Activated B cell treated with CpG ODN at 0.5 μM for 24 hours (primary cell): ENCODE measurements at regions of chr1 and their contacts with region 1.

Region 1: DNA sequence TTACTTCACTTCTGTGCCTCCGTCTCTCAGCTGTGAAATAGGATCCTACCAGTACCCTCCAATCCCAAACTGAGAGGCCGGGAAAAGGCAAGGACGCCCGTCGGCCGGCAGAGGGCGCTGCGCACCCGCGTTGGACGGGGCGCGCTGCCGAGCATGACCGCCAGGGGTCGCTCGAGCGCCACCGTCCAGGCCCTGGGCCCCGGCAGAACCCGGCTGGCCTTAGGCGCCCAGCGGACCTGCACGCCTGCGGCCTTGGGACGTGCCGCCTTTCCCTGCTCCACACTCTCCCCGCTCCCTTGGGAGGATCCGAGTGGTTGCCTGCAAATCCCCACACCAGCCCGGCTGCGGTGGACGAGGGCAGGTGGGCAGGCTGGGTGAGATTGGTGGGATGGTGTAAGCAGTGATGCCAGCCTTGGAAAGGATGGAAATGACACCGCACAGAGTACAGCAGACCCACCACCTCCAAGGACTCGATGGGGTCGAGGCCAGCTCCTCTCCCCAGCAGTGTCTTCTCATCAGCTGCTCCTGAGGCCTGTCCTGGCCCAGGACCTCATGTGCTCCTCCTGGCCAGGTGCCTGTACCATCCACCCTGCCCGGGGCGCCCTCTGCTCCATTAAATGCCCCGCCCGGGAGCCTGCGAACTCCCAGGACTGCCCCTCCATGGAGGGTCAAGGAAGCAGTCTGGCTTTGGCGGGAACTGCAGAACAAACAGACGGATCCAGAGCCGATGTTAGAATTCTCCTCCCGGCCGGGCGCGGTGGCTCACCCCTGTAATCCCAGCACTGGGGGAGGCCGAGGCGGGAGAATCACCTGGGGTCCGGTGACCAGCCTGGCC is 47.4 kb upstream of the LBR start:
- DNase-seq: peak; percentile 84
- ATAC-seq: peak; percentile 83
- H3K4me3 Mint-ChIP-seq: no peak overlapping the region
- H3K27ac Mint-ChIP-seq: no peak overlapping the region
- H3K4me1 Mint-ChIP-seq: peaks cover 40% of the 10 kb centered on the region
- H3K27me3 Mint-ChIP-seq: no peaks in the 10 kb centered on the region
- CTCF ChIP-seq: peak; percentile 100

Region 2: GRCh38 chr1:225514671-225515081 is 39.5 kb after region 1 on chr1:
- CTCF ChIA-PET with region 1: no interaction called
- POLR2A ChIA-PET with region 1: no interaction called
- intact Hi-C with region 1: no loop called
- DNase-seq: no peak
- ATAC-seq: no peak
- H3K4me3 Mint-ChIP-seq: no peak overlapping the region
- H3K27ac Mint-ChIP-seq: no peak overlapping the region
- H3K4me1 Mint-ChIP-seq: no peaks in the 10 kb centered on the region
- H3K27me3 Mint-ChIP-seq: peaks cover 13% of the 10 kb centered on the region
- CTCF ChIP-seq: no peak

Region 3: GRCh38 chr1:225652729-225653462 is 177.7 kb after region 1 on chr1 and contains the start of gene ENAH:
- CTCF ChIA-PET with region 1: interaction called, 3 read pairs
- POLR2A ChIA-PET with region 1: no interaction called
- intact Hi-C with region 1: loop called (anchors 5 kb)
- DNase-seq: peak; percentile 49
- ATAC-seq: peak; percentile 69
- H3K4me3 Mint-ChIP-seq: peak within 1 kb of the TSS; percentile 92
- H3K27ac Mint-ChIP-seq: peak within 1 kb of the TSS; percentile 24
- H3K4me1 Mint-ChIP-seq: peaks cover 13% of the 10 kb centered on the region
- H3K27me3 Mint-ChIP-seq: peaks cover 9% of the 10 kb centered on the region
- CTCF ChIP-seq: no peak
- total RNA-seq, gene ENAH: 1.2 and 1.4 TPM in 2 replicates

Region 4: GRCh38 chr1:225845571-225846259 is 370.5 kb after region 1 on chr1:
- CTCF ChIA-PET with region 1: interaction called, 3 read pairs
- POLR2A ChIA-PET with region 1: no interaction called
- intact Hi-C with region 1: loop called (anchors 2 kb)
- DNase-seq: no peak
- ATAC-seq: no peak
- H3K4me3 Mint-ChIP-seq: no peak overlapping the region
- H3K27ac Mint-ChIP-seq: peak overlapping the region; percentile 56
- H3K4me1 Mint-ChIP-seq: peaks cover 47% of the 10 kb centered on the region
- H3K27me3 Mint-ChIP-seq: no peaks in the 10 kb centered on the region
- CTCF ChIP-seq: no peak

Region 5: DNA sequence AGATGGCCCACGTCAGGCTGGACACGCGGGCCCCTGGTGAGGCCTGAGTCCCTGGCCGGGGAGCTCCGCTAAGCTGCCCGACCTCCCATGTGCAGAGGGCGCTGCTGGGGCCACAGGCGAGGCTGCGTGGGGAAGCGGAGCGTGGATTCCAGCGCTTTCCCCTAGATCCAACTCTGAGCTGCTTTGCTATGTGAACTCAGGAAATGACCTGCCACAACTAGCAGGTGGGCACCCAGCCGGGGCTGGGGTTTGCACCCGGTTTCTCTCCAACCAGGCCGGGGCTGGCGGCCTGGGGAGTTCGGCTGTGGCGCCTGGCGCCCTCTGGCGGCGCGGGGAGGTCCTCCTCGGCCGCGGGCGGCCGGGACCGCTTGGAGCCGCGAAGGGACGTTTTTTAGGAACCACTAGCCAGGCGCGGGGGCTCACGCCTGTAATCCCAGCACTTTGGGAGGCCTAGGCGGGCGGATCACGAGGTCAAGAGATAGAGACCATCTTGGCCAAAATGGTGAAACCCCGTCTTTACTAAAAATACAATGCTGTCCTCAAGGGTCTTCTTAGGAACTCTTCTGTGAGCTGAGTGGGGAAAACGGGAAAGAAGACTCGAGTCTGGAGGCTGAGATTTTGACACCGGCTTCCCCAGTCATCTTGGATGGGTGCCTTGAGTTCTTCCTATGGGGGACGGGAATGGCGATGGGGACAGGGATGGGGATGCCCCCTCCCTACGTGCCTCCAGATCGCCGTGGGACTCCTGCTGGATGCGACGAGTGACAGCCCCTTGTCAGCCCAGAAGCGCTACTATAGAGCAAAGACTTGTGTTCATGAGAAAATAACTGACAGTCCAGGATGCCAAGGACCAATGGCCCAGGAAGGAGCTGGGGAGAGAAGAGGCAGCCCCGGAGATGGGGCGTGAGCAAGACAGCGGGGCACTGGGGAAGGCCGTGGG is 436.3 kb after region 1 on chr1:
- CTCF ChIA-PET with region 1: interaction called, 12 read pairs
- POLR2A ChIA-PET with region 1: no interaction called
- intact Hi-C with region 1: loop called (anchors 1 kb)
- DNase-seq: peak; percentile 66
- ATAC-seq: peak; percentile 90
- H3K4me3 Mint-ChIP-seq: no peak overlapping the region
- H3K27ac Mint-ChIP-seq: no peak overlapping the region
- H3K4me1 Mint-ChIP-seq: peaks cover 23% of the 10 kb centered on the region
- H3K27me3 Mint-ChIP-seq: no peaks in the 10 kb centered on the region
- CTCF ChIP-seq: peak; percentile 40

Region 6: GRCh38 chr1:225987491-225988316 is 512.5 kb after region 1 on chr1:
- CTCF ChIA-PET with region 1: interaction called, 12 read pairs
- POLR2A ChIA-PET with region 1: interaction called, 3 read pairs
- intact Hi-C with region 1: no loop called
- DNase-seq: no peak
- ATAC-seq: peak; percentile 69
- H3K4me3 Mint-ChIP-seq: no peak overlapping the region
- H3K27ac Mint-ChIP-seq: peak overlapping the region; percentile 5
- H3K4me1 Mint-ChIP-seq: peaks cover 23% of the 10 kb centered on the region
- H3K27me3 Mint-ChIP-seq: no peaks in the 10 kb centered on the region
- CTCF ChIP-seq: peak; percentile 54